Ovary (tissue), 10 donors: ENCODE measurements at regions of chr20 and their contacts with region 1.

Region 1: DNA sequence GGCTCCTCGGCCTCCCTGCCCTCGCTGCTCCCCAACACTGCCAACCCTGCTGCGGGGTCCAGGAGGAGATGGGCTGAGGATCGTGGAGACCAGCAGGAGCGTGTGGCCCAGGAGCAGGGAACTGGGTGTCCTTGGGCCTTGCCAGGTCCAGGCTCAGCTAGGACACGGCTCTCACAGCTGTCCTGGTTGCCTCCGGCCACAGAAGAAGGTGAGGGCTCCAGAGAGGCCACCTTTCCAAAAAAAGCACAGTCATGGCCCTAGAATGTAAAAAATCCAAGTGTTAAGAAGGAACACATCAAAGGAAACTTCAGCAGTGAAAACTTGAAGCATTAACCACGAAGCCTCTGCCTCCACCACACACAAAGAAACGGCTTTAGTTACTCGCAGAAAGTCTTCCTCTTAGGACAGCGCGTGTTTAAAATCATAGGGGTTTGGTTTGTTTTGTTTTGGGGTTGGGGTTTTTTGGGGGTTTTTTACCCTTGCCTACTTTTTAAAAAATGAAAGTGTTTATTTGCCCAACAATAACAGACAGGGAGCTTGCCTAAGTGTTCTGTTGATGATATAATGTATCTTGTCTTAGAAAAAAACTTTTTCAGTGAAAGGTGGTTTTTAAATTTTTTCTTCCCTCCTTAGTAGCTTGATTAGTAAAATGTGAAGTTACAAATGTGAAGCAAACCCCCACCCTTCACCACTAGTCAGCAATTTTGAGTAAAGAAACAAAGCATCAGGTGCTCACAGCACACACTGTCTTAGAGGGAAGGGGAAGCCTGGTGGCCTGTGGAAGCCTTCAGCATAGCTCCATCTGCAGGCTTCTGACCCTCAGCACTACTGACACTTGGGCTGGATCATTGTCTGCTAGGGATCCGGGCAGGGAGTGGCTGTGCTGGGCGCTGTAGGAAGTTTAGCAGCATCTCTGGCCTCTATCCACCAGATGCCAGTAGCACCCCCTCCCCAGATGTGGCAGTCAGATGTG is 60.0 kb downstream of the PTPN1 start:
- DNase-seq: no peak
- H3K4me3 ChIP-seq: no peak overlapping the region
- H3K27ac ChIP-seq: no peak overlapping the region
- H3K4me1 ChIP-seq: peaks cover 13% of the 10 kb centered on the region
- H3K27me3 ChIP-seq: no peaks in the 10 kb centered on the region
- CTCF ChIP-seq: no peak
- EP300 ChIP-seq: no peak
- POLR2A ChIP-seq: no peak

Region 2: DNA sequence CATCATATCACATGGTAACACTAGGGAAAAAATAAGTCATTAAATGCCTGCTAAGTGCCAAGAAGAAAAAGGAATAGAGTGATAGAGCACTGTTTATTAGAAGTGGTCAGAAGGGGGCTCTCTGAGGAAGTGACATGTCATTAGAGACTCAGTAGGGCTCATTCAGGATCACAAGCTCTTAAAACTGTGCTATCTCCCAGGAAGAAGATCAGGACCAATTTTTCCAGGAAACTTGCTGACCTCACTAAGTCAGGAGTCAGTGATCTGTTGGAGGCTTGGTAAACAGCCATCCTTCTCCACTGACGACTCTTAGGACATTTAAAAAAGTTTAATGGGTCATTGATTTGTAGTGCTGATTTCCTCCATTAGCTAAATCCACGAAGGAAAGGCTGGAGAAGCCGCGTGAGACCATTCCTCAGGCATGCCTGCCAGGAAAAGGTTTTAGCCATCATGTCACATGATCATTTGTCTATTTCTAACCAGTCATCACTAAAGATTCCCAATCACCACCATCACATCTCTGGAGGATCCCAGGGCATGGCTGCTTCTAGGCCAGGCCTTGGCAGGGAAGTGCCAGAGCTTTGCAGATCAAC is 65.8 kb before region 1 on chr20:
- intact Hi-C with region 1: loop called in 1 of 4 experiments (anchors 5 kb)
- DNase-seq: no peak
- H3K4me3 ChIP-seq: no peak overlapping the region
- H3K27ac ChIP-seq: peak overlapping the region; percentile 17 to 23
- H3K4me1 ChIP-seq: peaks cover 8% of the 10 kb centered on the region
- H3K27me3 ChIP-seq: no peaks in the 10 kb centered on the region
- CTCF ChIP-seq: no peak
- EP300 ChIP-seq: no peak
- POLR2A ChIP-seq: no peak

Region 3: DNA sequence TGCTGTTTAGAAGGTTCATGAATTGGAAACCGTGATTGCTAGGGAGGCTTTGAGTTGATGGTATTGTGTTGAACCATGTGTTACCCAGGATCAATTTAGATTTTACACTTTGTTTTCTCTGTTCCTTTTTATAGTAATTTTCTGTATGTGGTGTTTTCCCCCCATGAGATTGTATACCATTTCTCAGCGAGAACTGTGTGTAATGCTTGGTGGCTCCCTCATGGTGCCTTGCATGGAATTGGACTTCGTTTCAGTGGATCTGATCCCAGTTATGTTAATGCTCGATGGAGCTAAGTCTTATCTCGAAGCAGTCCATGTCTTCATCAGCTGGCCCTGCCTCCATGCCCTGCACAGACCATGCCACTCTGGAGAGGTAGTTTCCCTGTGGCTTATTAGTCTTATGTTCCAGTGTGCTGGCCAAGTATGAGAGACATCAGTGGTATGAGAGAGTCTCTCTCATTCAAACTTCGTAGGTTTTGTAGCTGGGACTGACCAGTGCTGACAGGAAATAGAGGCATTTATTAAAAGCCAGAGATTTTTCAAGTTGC is 41.3 kb before region 1 on chr20:
- intact Hi-C with region 1: loop called in 1 of 4 experiments (anchors 5 kb)
- DNase-seq: no peak
- H3K4me3 ChIP-seq: no peak overlapping the region
- H3K27ac ChIP-seq: no peak overlapping the region
- H3K4me1 ChIP-seq: peaks cover 10% of the 10 kb centered on the region
- H3K27me3 ChIP-seq: no peaks in the 10 kb centered on the region
- CTCF ChIP-seq: no peak
- EP300 ChIP-seq: no peak
- POLR2A ChIP-seq: no peak

Region 4: DNA sequence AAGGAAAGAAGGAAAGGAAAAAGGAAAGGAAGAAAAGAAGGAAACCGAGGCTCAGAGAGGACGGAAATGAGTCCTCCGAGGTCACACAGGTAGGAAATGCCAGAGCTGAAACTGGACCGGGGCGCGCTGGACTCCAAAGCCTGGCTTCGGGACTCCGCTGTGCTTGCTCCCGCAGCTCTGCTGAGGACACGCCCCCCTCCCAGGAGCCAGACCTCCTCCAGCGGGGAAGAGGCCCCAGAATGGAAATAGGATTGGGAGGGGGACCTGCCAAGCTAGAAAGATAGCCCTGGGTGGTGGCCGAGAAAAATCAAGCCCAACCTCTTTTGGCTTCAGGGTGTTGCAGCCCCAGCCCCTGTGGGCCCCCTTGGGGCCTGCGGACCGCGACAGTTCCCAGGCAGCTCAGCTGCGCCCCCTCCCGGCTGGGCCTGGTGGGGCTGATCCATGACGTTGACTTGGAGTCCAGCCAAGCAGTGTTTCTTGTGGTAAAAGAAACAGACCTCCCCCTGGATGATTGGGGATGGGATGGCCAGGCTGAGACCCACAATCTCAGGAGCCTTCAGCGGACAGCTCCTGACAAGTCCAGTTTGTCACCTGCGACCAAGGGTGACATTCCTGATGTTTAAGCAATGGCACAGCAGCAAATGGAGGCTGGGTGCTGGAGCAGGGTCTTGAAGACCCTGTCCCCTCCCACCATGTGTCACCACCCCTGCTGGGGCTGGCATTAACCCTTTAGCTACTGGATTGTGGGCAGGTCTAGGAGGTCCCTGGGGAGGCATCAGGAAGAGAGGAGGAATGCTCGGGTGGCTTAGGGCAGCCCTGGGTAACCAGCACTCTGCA is 65.7 kb after region 1 on chr20:
- intact Hi-C with region 1: no loop called
- DNase-seq: peak; percentile 65 to 82 (median 72)
- H3K4me3 ChIP-seq: no peak overlapping the region
- H3K27ac ChIP-seq: no peak overlapping the region
- H3K4me1 ChIP-seq: peaks cover 13% of the 10 kb centered on the region
- H3K27me3 ChIP-seq: no peaks in the 10 kb centered on the region
- CTCF ChIP-seq: peak; percentile 34 to 66 (median 53)
- EP300 ChIP-seq: no peak
- POLR2A ChIP-seq: no peak